ENCODE measurements at regions of chr20 and their contacts with region 1.

Region 1: GRCh38 chr20:63740627-63741354 is 1.2 kb downstream of the SLC2A4RG start:
- DNase-seq: peak; percentile 85
- H3K4me3 ChIP-seq: peak overlapping the region; percentile 78
- H3K27ac ChIP-seq: peak overlapping the region; percentile 88
- H3K4me1 ChIP-seq: peaks cover 16% of the 10 kb centered on the region
- H3K27me3 ChIP-seq: no peaks in the 10 kb centered on the region
- CTCF ChIP-seq: 0 out of 2 replicates have a peak, but pooled peaks have one; percentile 17

Region 2: GRCh38 chr20:63750807-63751470 is 10.1 kb after region 1 on chr20:
- CTCF ChIA-PET with region 1: no interaction called
- POLR2A ChIA-PET with region 1: interaction called, 11 read pairs
- intact Hi-C with region 1: no loop called
- DNase-seq: no peak
- H3K4me3 ChIP-seq: no peak overlapping the region
- H3K27ac ChIP-seq: no peak overlapping the region
- H3K4me1 ChIP-seq: no peaks in the 10 kb centered on the region
- H3K27me3 ChIP-seq: no peaks in the 10 kb centered on the region
- CTCF ChIP-seq: no peak

Region 3: GRCh38 chr20:63829932-63830835 is 89.4 kb after region 1 on chr20:
- CTCF ChIA-PET with region 1: no interaction called
- POLR2A ChIA-PET with region 1: no interaction called
- intact Hi-C with region 1: no loop called
- DNase-seq: no peak
- H3K4me3 ChIP-seq: peak overlapping the region; percentile 50
- H3K27ac ChIP-seq: no peak overlapping the region
- H3K4me1 ChIP-seq: no peaks in the 10 kb centered on the region
- H3K27me3 ChIP-seq: peaks cover 38% of the 10 kb centered on the region
- CTCF ChIP-seq: no peak

Region 4: GRCh38 chr20:63864847-63865640 is 124.3 kb after region 1 on chr20 and contains the start of gene TPD52L2:
- CTCF ChIA-PET with region 1: no interaction called
- POLR2A ChIA-PET with region 1: interaction called, 20 read pairs
- intact Hi-C with region 1: no loop called
- DNase-seq: peak; percentile 99
- H3K4me3 ChIP-seq: peak within 1 kb of the TSS; percentile 88
- H3K27ac ChIP-seq: peak within 1 kb of the TSS; percentile 92
- H3K4me1 ChIP-seq: no peaks in the 10 kb centered on the region
- H3K27me3 ChIP-seq: no peaks in the 10 kb centered on the region
- CTCF ChIP-seq: no peak
- total RNA-seq, gene TPD52L2: 80.1 and 89.9 TPM in 2 replicates

Measured in A673 (cell line).